ENCODE measurements at regions of chr12 and their contacts with region 1.

Region 1: GRCh38 chr12:21818627-21819026 is 44.1 kb upstream of the KCNJ8 start:
- DNase-seq: peak in 1 of 2 experiments; percentile 57
- H3K4me3 ChIP-seq: no peak overlapping the region
- H3K4me3 Mint-ChIP-seq: peak overlapping the region; percentile 61
- H3K27ac Mint-ChIP-seq: peak overlapping the region; percentile 94
- H3K4me1 ChIP-seq: peaks cover 78% of the 10 kb centered on the region
- H3K4me1 Mint-ChIP-seq: peaks cover 55% of the 10 kb centered on the region
- H3K27me3 ChIP-seq: no peaks in the 10 kb centered on the region
- H3K27me3 Mint-ChIP-seq: no peaks in the 10 kb centered on the region
- CTCF ChIP-seq: no peak

Region 2: DNA sequence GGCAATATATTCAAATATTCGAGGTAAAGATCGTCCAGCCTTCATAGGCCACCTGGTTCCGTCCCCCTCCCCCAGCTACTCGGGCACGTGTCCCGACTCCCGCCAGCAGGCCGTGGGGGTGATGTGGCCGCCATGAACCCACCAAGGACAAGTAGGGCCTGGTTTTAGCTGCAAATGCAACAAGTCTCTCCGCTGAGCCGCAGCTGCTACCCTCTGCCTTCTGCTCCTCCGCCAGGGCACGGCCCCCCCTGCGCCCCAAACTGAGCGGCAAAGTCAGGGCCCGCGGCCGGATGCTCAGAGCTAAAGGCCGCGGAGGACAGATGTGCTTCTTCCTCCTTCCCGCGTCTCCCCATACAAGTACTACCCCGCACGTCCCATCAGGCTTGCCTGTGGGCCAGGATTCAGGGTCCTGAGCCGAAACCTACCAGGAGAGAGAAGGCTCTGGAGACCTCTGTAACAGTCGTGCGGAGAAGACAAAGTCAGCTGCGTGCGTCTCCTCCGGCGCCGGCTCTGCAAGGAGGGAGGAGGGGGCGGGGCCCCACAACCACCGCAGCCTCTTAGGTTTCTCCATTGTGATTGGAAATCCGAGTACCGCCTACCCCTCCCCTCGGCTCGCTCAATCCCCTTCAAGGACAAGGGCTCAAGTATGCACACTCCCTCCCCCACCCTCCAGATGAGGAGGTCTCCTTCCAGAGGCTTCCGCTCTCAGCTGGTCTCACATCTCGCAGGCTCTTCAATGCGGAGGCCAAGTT is 161.1 kb before region 1 on chr12 and contains the start of gene LDHB:
- CTCF ChIA-PET with region 1: no interaction called
- POLR2A ChIA-PET with region 1: interaction called, 3 read pairs
- intact Hi-C with region 1: loop called (anchors 1 kb)
- DNase-seq: peak; percentile 99
- H3K4me3 ChIP-seq: peak within 1 kb of the TSS; percentile 78
- H3K4me3 Mint-ChIP-seq: peak within 1 kb of the TSS; percentile 85
- H3K27ac Mint-ChIP-seq: peak within 1 kb of the TSS; percentile 96
- H3K4me1 ChIP-seq: peaks cover 38% of the 10 kb centered on the region
- H3K4me1 Mint-ChIP-seq: peaks cover 32% of the 10 kb centered on the region
- H3K27me3 ChIP-seq: no peaks in the 10 kb centered on the region
- H3K27me3 Mint-ChIP-seq: no peaks in the 10 kb centered on the region
- CTCF ChIP-seq: no peak
- total RNA-seq, gene LDHB: 1,752 and 1,948 TPM in 2 replicates

Region 3: GRCh38 chr12:21773263-21773741 is 45.3 kb before region 1 on chr12:
- CTCF ChIA-PET with region 1: interaction called, 24 read pairs
- POLR2A ChIA-PET with region 1: interaction called, 29 read pairs
- intact Hi-C with region 1: loop called (anchors 1 kb)
- DNase-seq: peak; percentile 88 to 89
- H3K4me3 ChIP-seq: peak overlapping the region; percentile 88
- H3K4me3 Mint-ChIP-seq: peak overlapping the region; percentile 76
- H3K27ac Mint-ChIP-seq: peak overlapping the region; percentile 41
- H3K4me1 ChIP-seq: peaks cover 35% of the 10 kb centered on the region
- H3K4me1 Mint-ChIP-seq: peaks cover 51% of the 10 kb centered on the region
- H3K27me3 ChIP-seq: no peaks in the 10 kb centered on the region
- H3K27me3 Mint-ChIP-seq: no peaks in the 10 kb centered on the region
- CTCF ChIP-seq: peak; percentile 76 to 87

Region 4: DNA sequence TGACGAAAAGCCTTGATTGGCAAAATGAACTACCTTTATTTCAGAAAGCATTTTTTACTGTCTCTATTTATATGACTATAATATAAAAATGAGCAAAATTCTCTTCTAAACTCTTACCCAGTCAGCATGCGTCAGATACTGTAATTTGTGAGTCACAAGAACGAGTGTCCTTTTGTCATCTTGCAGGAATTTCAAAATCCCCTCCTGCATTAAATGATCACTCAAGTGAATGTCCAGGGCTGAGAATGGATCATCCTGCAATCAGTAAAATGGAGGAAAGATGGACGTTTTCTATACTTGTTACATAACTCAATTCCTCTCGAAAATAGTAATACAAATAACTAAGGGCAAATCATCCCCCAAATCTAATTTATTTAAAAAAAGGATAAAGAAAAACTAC is 33.6 kb after region 1 on chr12:
- CTCF ChIA-PET with region 1: no interaction called
- POLR2A ChIA-PET with region 1: interaction called, 10 read pairs
- intact Hi-C with region 1: no loop called
- DNase-seq: no peak
- H3K4me3 ChIP-seq: no peak overlapping the region
- H3K4me3 Mint-ChIP-seq: no peak overlapping the region
- H3K27ac Mint-ChIP-seq: no peak overlapping the region
- H3K4me1 ChIP-seq: no peaks in the 10 kb centered on the region
- H3K4me1 Mint-ChIP-seq: peaks cover 13% of the 10 kb centered on the region
- H3K27me3 ChIP-seq: no peaks in the 10 kb centered on the region
- H3K27me3 Mint-ChIP-seq: no peaks in the 10 kb centered on the region
- CTCF ChIP-seq: no peak

Region 5: GRCh38 chr12:21989819-21990412 is 171.3 kb after region 1 on chr12:
- CTCF ChIA-PET with region 1: interaction called, 5 read pairs
- POLR2A ChIA-PET with region 1: no interaction called
- intact Hi-C with region 1: loop called (anchors 1 kb)
- DNase-seq: peak in 1 of 2 experiments; percentile 46
- H3K4me3 ChIP-seq: no peak overlapping the region
- H3K4me3 Mint-ChIP-seq: no peak overlapping the region
- H3K27ac Mint-ChIP-seq: no peak overlapping the region
- H3K4me1 ChIP-seq: peaks cover 24% of the 10 kb centered on the region
- H3K4me1 Mint-ChIP-seq: peaks cover 35% of the 10 kb centered on the region
- H3K27me3 ChIP-seq: no peaks in the 10 kb centered on the region
- H3K27me3 Mint-ChIP-seq: no peaks in the 10 kb centered on the region
- CTCF ChIP-seq: peak; percentile 83 to 85